ENCODE measurements at regions of chr5 and their contacts with region 1.

Region 1: GRCh38 chr5:168486136-168486879 is at the start of gene RARS1:
- DNase-seq: peak; percentile 94 to 96 (median 95)
- ATAC-seq: peak; percentile 96 to 100 (median 99)
- H3K4me3 ChIP-seq: peak within 1 kb of the TSS; percentile 64 to 99 (median 80)
- H3K27ac ChIP-seq: peak within 1 kb of the TSS in 11 of 12 donors; percentile 44 to 85 (median 74)
- H3K4me1 ChIP-seq: peaks cover 0 to 14% (median 8%) of the 10 kb centered on the region in 12 donors
- H3K27me3 ChIP-seq: no peaks in the 10 kb centered on the region
- CTCF ChIP-seq: peak; percentile 90 to 99 (median 96)
- POLR2A ChIP-seq: peak in 1 of 2 donors; percentile 88
- total RNA-seq, gene RARS1: 38.1 to 64.4 (median 48.6) TPM

Region 2: DNA sequence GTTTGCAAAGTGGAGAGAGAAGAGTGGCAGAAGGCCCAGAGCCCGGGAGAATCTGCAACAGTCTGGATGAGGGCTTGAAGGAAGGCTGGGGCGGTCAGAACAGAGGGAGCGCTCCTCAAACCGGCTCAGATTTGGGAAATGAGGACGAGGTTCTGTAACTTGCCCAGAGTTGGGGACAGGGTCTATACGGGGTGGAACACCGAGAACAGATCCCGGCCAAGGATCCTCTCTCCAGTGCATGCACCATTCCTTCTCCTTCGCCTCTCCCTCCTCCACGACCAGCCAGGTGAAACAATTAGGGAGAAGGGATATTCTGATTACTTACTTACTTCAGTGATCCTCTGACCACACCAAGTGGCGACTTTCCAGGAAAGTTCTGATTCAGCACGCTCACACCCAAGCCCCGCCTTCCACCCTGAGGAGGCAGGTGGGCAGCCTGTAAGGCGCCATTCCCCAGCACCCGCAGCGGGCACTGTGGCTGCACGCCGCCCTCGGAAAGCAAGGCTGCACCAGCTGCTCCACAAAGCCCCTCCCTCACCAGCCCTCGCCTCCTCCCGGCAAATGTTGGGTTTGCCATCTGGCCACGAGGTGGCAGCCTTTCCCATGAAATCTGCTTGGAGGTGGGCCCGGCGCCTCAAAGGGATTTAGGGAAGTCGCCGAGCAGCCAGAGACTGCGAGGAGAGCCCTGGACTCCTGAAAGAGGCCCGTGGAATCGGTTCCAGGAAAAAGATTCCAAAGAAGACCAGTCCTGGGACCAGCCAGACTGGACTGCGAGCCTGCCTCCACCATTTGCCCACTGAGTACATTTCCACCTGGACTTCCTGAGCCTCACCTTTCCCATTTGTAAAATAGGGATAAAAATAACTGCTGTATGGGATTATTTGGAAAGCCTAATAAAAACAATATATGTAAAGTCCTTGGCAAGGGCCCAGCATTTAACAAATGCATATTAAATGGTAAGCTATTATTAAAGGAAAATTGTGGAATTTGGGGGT is 217.1 kb before region 1 on chr5:
- intact Hi-C with region 1: loop called in 8 of 10 experiments (anchors 1 to 10 kb)
- DNase-seq: peak; percentile 75 to 89 (median 83)
- ATAC-seq: peak; percentile 84 to 88 (median 86)
- H3K4me3 ChIP-seq: peak overlapping the region in 10 of 12 donors; percentile 26 to 50 (median 42)
- H3K27ac ChIP-seq: no peak overlapping the region
- H3K4me1 ChIP-seq: peaks cover 0 to 17% (median 13%) of the 10 kb centered on the region in 12 donors
- H3K27me3 ChIP-seq: peaks cover 0 to 6% (median 0%) of the 10 kb centered on the region in 9 donors
- CTCF ChIP-seq: peak; percentile 66 to 97 (median 86)
- POLR2A ChIP-seq: no peak

Region 3: GRCh38 chr5:168579488-168580226 is 93.3 kb after region 1 on chr5:
- intact Hi-C with region 1: loop called in 5 of 10 experiments (anchors 1 to 10 kb)
- DNase-seq: peak; percentile 99
- ATAC-seq: peak; percentile 98 to 99 (median 99)
- H3K4me3 ChIP-seq: peak overlapping the region; percentile 68 to 99 (median 92)
- H3K27ac ChIP-seq: peak overlapping the region; percentile 93 to 98 (median 97)
- H3K4me1 ChIP-seq: peaks cover 0 to 43% (median 26%) of the 10 kb centered on the region in 12 donors
- H3K27me3 ChIP-seq: no peaks in the 10 kb centered on the region
- CTCF ChIP-seq: no peak
- POLR2A ChIP-seq: peak in 1 of 2 donors; percentile 85